ENCODE measurements at regions of chr5 and their contacts with region 1.

Region 1: GRCh38 chr5:126801992-126802294 is 25.0 kb downstream of the LMNB1 start:
- H3K4me3 Mint-ChIP-seq: no peak overlapping the region
- H3K27ac Mint-ChIP-seq: no peak overlapping the region
- H3K4me1 Mint-ChIP-seq: peaks cover 44% of the 10 kb centered on the region
- H3K27me3 Mint-ChIP-seq: no peaks in the 10 kb centered on the region

Region 2: GRCh38 chr5:126676195-126676624 is 125.7 kb before region 1 on chr5:
- intact Hi-C with region 1: loop called (anchors 5 kb)
- H3K4me3 Mint-ChIP-seq: no peak overlapping the region
- H3K27ac Mint-ChIP-seq: no peak overlapping the region
- H3K4me1 Mint-ChIP-seq: peaks cover 36% of the 10 kb centered on the region
- H3K27me3 Mint-ChIP-seq: no peaks in the 10 kb centered on the region

Region 3: GRCh38 chr5:126869005-126869451 is 67.1 kb after region 1 on chr5:
- intact Hi-C with region 1: no loop called
- H3K4me3 Mint-ChIP-seq: peak overlapping the region; percentile 51
- H3K27ac Mint-ChIP-seq: no peak overlapping the region
- H3K4me1 Mint-ChIP-seq: peaks cover 19% of the 10 kb centered on the region
- H3K27me3 Mint-ChIP-seq: peaks cover 10% of the 10 kb centered on the region